ENCODE measurements at regions of chrX and their contacts with region 1.

Region 1: GRCh38 chrX:63963095-63963784 is 178.2 kb upstream of the ARHGEF9 start:
- DNase-seq: no peak
- ATAC-seq: no peak
- H3K4me3 ChIP-seq: no peak overlapping the region
- H3K27ac ChIP-seq: no peak overlapping the region
- H3K4me1 ChIP-seq: no peaks in the 10 kb centered on the region
- H3K27me3 ChIP-seq: no peaks in the 10 kb centered on the region
- CTCF ChIP-seq: no peak
- POLR2A ChIP-seq: no peak
- RAD21 ChIP-seq: no peak

Region 2: GRCh38 chrX:63503541-63503940 is 459.7 kb before region 1 on chrX:
- CTCF ChIA-PET with region 1: no interaction called
- POLR2A ChIA-PET with region 1: no interaction called
- dilution Hi-C with region 1: no loop called
- in situ Hi-C with region 1: no loop called
- intact Hi-C with region 1: no loop called
- DNase-seq: peak; percentile 20
- ATAC-seq: peak; percentile 78
- H3K4me3 ChIP-seq: no peak overlapping the region
- H3K27ac ChIP-seq: no peak overlapping the region
- H3K4me1 ChIP-seq: no peaks in the 10 kb centered on the region
- H3K27me3 ChIP-seq: no peaks in the 10 kb centered on the region
- CTCF ChIP-seq: no peak
- POLR2A ChIP-seq: no peak
- RAD21 ChIP-seq: no peak

Region 3: GRCh38 chrX:63913719-63914118 is 49.5 kb before region 1 on chrX:
- CTCF ChIA-PET with region 1: no interaction called
- POLR2A ChIA-PET with region 1: no interaction called
- dilution Hi-C with region 1: no loop called
- in situ Hi-C with region 1: no loop called
- intact Hi-C with region 1: loop called (anchors 10 kb)
- DNase-seq: no peak
- ATAC-seq: no peak
- H3K4me3 ChIP-seq: no peak overlapping the region
- H3K27ac ChIP-seq: no peak overlapping the region
- H3K4me1 ChIP-seq: no peaks in the 10 kb centered on the region
- H3K27me3 ChIP-seq: no peaks in the 10 kb centered on the region
- CTCF ChIP-seq: no peak
- POLR2A ChIP-seq: no peak
- RAD21 ChIP-seq: no peak